Astrocyte of the cerebellum (primary cell): ENCODE measurements at regions of chr20 and their contacts with region 1.

Region 1: GRCh38 chr20:18904624-18905023 is 91.0 kb downstream of the SCP2D1 start:
- DNase-seq: no peak
- H3K4me3 ChIP-seq: no peak overlapping the region
- CTCF ChIP-seq: no peak

Region 2: GRCh38 chr20:18831830-18832499 is 72.7 kb before region 1 on chr20:
- in situ Hi-C with region 1: loop called (anchors 10 kb)
- DNase-seq: no peak
- H3K4me3 ChIP-seq: no peak overlapping the region
- CTCF ChIP-seq: no peak

Region 3: DNA sequence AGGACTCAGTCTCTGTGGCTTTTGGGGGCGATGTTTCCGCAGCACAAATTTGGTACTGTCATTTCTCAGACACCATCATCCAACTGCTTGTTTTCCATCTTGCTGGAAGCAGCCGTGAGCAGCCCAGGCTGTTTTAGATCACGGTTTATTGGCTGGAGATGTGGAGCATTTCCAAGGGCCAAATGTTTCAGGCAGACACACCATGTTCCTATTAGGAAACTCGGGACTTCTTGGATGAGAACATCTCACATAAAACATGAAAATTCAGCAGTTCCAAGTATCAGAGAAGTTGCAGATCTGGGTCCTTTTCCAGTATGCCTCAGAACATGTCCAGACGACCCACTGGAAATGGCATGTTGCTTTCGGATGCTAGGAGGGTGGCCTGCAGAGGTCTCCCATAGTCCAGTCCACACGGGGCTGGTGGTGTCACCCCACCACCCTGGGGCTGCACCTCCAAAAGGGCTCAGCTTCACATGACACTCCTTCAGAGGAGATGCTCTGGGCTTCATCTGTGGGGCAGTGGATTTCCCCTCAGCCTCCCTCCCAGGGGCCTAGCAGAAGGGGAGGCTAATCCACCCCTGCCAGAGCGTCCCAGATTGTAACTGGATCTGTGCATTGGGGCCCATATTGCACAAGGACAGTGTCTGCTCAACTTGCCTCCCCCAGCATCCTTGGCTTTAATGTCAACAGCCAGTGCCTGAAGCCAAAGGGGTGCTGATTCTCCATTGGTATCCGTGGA is 85.3 kb after region 1 on chr20:
- in situ Hi-C with region 1: no loop called
- DNase-seq: no peak
- H3K4me3 ChIP-seq: no peak overlapping the region
- CTCF ChIP-seq: no peak

Region 4: DNA sequence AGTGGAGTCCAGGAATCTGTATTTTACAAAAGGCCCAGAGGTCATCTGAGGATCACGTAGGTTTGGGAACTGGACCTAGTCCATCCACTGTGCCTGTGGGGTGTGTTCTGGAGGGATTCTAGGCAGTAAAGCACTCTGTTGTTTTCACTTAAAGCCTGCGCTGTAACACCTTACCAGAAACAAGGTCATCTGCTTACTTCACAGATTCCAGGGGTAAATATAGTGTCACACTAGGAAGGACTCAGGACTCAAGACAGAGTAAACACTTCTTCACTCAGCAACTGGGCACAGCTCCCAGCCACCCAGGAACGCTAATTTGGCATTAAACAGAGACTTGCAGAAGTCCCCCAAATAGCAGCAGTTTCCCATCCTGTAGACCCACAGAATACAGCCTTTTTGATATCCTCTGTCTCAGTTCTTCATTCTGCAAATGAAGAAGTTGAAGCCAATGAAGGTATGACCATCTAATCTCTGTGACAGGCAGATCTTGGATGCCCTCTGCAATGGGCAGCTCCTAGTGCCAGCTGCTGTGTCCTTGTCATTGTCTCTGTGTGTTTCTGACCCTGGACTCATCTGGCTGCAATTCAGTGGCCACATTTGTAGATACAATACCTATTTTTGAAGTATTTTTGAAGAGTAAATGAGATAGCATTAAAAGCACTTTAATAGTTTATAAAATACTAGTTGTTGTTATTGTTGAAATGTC is 436.9 kb after region 1 on chr20:
- in situ Hi-C with region 1: no loop called
- DNase-seq: no peak
- H3K4me3 ChIP-seq: no peak overlapping the region
- CTCF ChIP-seq: no peak